ENCODE measurements at regions of chr19 and their contacts with region 1.

Region 1: GRCh38 chr19:54281007-54281728 is at the start of gene LILRB2:
- DNase-seq: no peak
- H3K4me3 ChIP-seq: no peak within 1 kb of the TSS
- H3K27ac ChIP-seq: no peak within 1 kb of the TSS
- H3K4me1 ChIP-seq: no peaks in the 10 kb centered on the region
- H3K27me3 ChIP-seq: no peaks in the 10 kb centered on the region
- CTCF ChIP-seq: no peak
- POLR2A ChIP-seq: no peak
- total RNA-seq, gene LILRB2: 0.41 to 4.2 (median 1.7) TPM

Region 2: GRCh38 chr19:54541712-54542111 is 260.5 kb after region 1 on chr19:
- intact Hi-C with region 1: no loop called
- DNase-seq: no peak
- H3K4me3 ChIP-seq: no peak overlapping the region
- H3K27ac ChIP-seq: no peak overlapping the region
- H3K4me1 ChIP-seq: no peaks in the 10 kb centered on the region
- H3K27me3 ChIP-seq: no peaks in the 10 kb centered on the region
- CTCF ChIP-seq: no peak
- POLR2A ChIP-seq: no peak

Region 3: DNA sequence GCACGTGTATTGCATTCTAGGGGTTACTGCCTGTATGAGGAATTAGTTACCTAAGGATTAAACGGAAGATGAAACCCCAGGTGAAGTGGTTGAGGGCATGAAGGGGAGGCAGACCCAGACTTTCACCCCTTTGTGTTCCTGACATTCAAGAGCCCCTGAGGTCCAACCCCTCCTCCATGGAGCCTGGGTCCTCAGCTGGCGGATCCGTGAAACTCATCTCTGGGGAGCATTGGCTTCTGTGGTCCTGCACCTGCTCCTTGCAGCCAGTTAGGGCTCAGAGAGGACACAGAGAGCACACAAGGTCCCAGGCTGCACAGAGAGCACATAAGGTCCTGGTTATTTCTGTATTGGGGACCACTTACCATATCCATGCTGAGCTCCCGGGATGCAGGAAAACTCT is 305.2 kb after region 1 on chr19:
- intact Hi-C with region 1: loop called (anchors 2 kb)
- DNase-seq: no peak
- H3K4me3 ChIP-seq: no peak overlapping the region
- H3K27ac ChIP-seq: no peak overlapping the region
- H3K4me1 ChIP-seq: no peaks in the 10 kb centered on the region
- H3K27me3 ChIP-seq: no peaks in the 10 kb centered on the region
- CTCF ChIP-seq: no peak
- POLR2A ChIP-seq: no peak

Measured in uterus (tissue), 4 donors.